Activated CD8-positive, alpha-beta memory T cell treated with anti-CD3 and anti-CD28 coated beads, Interleukin-2, amount 10 ng/mL, durations not matched to agents 7 days and 5 days (primary cell): ENCODE measurements at regions of chr19 and their contacts with region 1.

Region 1: DNA sequence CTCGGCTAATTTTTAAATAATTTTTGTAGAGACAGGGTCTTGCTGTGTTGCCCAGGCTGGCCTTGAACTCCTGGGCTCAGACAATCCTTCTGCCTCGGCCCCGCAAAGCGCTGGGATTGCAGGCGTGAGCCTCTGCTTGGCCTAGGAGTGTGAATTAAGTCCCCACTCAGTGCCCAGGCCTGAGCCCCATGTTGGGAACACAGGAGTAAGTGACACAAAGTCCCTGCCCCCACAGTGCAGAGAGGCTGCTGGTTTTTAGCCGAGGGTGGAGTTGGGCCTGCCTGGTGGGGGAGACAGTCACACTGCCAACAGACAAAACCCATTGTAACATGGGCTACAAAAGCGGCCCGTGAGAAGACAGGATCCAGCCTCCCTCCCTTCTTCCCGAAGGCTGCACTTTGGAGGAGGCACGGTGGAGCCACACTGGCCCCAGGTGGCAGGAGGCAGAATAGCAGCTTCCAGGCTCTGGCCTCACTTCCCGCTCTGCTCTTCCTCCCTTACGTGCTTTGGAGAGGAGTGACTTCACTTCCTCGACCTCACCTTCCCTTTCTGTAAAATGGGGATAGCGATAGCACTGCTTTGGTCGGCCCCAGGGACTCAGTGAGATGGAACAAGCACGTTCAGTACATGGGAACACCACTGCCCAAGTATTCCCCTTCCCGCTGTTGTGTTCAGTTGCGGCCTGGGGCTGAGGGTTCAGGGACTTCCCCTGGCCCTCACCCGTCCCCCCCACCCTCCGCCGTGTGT is 15.2 kb upstream of the EHD2 start:
- DNase-seq: peak; percentile 71
- ATAC-seq: peak; percentile 81
- H3K4me3 Mint-ChIP-seq: no peak overlapping the region
- H3K27ac Mint-ChIP-seq: no peak overlapping the region
- H3K4me1 Mint-ChIP-seq: peaks cover 2% of the 10 kb centered on the region
- H3K27me3 Mint-ChIP-seq: no peaks in the 10 kb centered on the region

Region 2: DNA sequence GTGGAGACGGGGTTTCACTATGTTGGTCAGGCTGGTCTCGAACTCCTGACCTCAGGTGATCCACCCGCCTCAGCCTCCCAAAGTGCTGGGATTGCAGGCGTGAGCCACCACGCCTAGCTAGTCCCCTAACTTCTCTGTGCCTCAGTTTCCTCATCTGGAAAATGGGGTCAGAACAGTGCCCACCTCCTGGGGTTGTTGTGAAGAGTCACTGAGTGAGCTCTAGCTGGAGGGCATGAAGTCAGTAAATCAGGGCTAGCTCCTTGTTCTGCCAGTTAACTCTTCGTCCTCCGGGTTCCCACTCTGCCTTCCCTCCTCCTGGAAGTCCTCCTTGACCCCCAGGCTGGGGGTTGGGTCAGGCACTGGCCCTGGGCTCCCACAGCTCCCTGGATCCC is 24.7 kb after region 1 on chr19:
- CTCF ChIA-PET with region 1: interaction called, 10 read pairs
- DNase-seq: no peak
- ATAC-seq: no peak
- H3K4me3 Mint-ChIP-seq: no peak overlapping the region
- H3K27ac Mint-ChIP-seq: no peak overlapping the region
- H3K4me1 Mint-ChIP-seq: no peaks in the 10 kb centered on the region
- H3K27me3 Mint-ChIP-seq: peaks cover 2% of the 10 kb centered on the region

Region 3: DNA sequence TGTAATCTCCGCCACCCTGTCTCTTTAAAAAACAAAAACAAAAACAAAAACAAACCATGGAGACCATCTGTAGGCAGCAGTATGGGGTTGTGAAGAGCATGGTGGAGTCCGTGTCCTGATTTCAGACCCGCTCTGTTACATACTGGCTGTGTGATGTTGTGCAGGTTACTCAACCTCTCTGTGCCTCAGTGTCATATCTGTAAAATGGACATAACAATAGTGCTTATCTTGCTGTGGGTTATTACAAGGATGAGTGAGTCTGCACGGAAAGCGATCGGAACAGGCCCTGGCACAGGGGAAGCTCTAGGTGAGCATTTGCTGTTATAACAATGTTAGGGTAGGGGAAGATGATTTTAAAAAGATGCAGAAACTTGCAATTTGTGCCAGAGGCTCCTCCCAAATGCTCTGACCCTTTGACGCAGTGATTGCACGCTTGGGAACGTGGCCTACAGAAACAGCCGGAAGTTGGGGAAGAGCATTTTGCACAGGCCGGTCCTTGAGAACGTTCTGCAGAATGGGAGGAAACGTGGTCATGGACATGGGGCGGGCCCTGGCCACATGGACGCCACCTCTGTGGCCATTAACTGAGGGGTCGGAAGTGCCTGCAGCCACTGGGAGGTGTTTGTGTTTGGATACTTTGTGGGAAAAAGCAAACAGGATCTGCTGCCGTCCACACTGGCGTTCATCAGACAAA is 64.7 kb after region 1 on chr19:
- CTCF ChIA-PET with region 1: no interaction called
- DNase-seq: no peak
- ATAC-seq: no peak
- H3K4me3 Mint-ChIP-seq: no peak overlapping the region
- H3K27ac Mint-ChIP-seq: no peak overlapping the region
- H3K4me1 Mint-ChIP-seq: peaks cover 5% of the 10 kb centered on the region
- H3K27me3 Mint-ChIP-seq: no peaks in the 10 kb centered on the region